PC-9 (cell line): ENCODE measurements at regions of chr4 and their contacts with region 1.

Region 1: GRCh38 chr4:55184600-55185523 is 59.5 kb upstream of the KDR start:
- DNase-seq: peak in 1 of 2 experiments; percentile 43
- H3K4me3 ChIP-seq: no peak overlapping the region
- H3K27ac ChIP-seq: peak overlapping the region; percentile 67
- H3K4me1 ChIP-seq: peaks cover 18% of the 10 kb centered on the region
- H3K27me3 ChIP-seq: no peaks in the 10 kb centered on the region
- CTCF ChIP-seq: peak; percentile 36

Region 2: DNA sequence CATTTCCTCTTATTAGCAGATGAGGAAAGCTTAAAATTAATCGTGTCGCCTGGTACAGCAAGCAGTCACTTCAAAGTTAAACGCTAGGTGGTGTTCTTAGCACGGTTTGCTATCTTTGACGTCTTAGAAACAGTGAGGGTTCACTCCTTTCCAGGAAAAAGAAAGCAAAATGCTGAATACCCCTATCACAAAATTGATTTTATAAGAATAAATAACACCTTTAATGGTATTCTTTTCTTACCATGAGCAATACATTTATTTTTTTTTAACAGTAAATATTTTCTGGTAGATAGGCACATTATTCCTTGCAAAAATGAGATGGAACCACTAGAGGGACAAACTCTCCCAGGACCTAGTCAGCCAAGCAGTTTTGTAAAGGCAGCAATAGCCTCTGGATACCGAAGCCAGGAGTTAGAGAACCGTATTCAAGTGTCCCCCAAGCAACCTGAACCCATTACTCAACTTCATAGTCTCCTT is 213.3 kb before region 1 on chr4:
- CTCF ChIA-PET with region 1: interaction called, 6 read pairs
- POLR2A ChIA-PET with region 1: no interaction called
- intact Hi-C with region 1: loop called (anchors 5 kb)
- DNase-seq: peak in 1 of 2 experiments; percentile 2
- H3K4me3 ChIP-seq: no peak overlapping the region
- H3K27ac ChIP-seq: no peak overlapping the region
- H3K4me1 ChIP-seq: no peaks in the 10 kb centered on the region
- H3K27me3 ChIP-seq: no peaks in the 10 kb centered on the region
- CTCF ChIP-seq: peak; percentile 88

Region 3: DNA sequence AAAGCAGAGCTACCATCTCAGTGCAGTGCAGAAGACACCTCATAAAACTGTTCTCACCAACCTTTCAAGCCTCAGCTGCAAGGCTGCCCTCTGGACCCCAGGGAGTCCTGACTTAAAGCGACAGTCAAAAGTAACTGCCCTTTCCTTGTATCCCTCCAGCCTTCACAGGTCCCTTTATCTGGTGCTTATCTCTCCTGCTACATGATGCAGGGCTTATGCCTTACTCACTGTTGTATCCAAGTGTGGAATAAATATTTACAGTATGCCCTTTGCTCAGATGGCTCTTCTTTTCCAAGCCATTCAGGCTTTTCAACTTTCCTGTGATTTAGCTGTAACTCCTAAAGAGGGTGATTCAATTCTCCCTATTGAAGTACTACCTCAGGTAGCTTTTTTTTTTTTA is 152.1 kb before region 1 on chr4:
- CTCF ChIA-PET with region 1: no interaction called
- POLR2A ChIA-PET with region 1: interaction called, 6 read pairs
- intact Hi-C with region 1: loop called (anchors 1 kb)
- DNase-seq: peak; percentile 2 to 41
- H3K4me3 ChIP-seq: peak overlapping the region; percentile 29; the same call in 1 of the 2 replicates
- H3K27ac ChIP-seq: peak overlapping the region; percentile 88
- H3K4me1 ChIP-seq: peaks cover 32% of the 10 kb centered on the region
- H3K27me3 ChIP-seq: no peaks in the 10 kb centered on the region
- CTCF ChIP-seq: no peak

Region 4: GRCh38 chr4:55103224-55103623 is 81.6 kb before region 1 on chr4:
- CTCF ChIA-PET with region 1: interaction called, 11 read pairs
- POLR2A ChIA-PET with region 1: no interaction called
- intact Hi-C with region 1: no loop called
- DNase-seq: no peak
- H3K4me3 ChIP-seq: no peak overlapping the region
- H3K27ac ChIP-seq: no peak overlapping the region
- H3K4me1 ChIP-seq: no peaks in the 10 kb centered on the region
- H3K27me3 ChIP-seq: no peaks in the 10 kb centered on the region
- CTCF ChIP-seq: no peak

Region 5: GRCh38 chr4:55138367-55138766 is 46.5 kb before region 1 on chr4:
- CTCF ChIA-PET with region 1: interaction called, 11 read pairs
- POLR2A ChIA-PET with region 1: no interaction called
- intact Hi-C with region 1: no loop called
- DNase-seq: no peak
- H3K4me3 ChIP-seq: no peak overlapping the region
- H3K27ac ChIP-seq: no peak overlapping the region
- H3K4me1 ChIP-seq: 0 out of 2 replicates have a peak, but pooled peaks cover under 1% of the 10 kb centered on the region
- H3K27me3 ChIP-seq: no peaks in the 10 kb centered on the region
- CTCF ChIP-seq: no peak

Region 6: DNA sequence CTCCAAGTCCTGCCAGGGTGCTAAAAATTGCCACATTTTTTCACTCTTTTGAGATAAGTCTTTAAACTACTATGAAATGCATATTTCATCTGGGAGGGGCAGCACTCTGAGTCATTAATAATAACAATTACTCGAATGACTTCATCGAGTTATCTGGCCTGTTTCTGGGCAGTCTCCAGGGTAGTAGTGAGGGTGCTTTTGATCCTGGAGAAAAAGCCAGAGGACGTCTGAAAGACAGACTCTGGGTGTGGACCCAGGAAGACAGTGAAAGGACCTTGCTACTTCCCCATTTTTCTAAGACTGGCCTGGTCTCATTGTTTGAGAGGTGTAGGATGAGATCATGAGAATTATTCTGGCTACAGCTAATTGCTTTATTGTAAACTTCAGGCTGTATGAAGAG is 119.0 kb after region 1 on chr4:
- CTCF ChIA-PET with region 1: no interaction called
- POLR2A ChIA-PET with region 1: no interaction called
- intact Hi-C with region 1: loop called (anchors 5 kb)
- DNase-seq: peak; percentile 52 to 80
- H3K4me3 ChIP-seq: no peak overlapping the region
- H3K27ac ChIP-seq: peak overlapping the region; percentile 61
- H3K4me1 ChIP-seq: peaks cover 14% of the 10 kb centered on the region
- H3K27me3 ChIP-seq: no peaks in the 10 kb centered on the region
- CTCF ChIP-seq: no peak